ENCODE measurements at regions of chr1 and their contacts with region 1.

Region 1: GRCh38 chr1:182397771-182398393 is 2.6 kb downstream of the TEDDM1 start:
- DNase-seq: peak; percentile 81
- H3K4me3 Mint-ChIP-seq: peak overlapping the region; percentile 0
- H3K27ac Mint-ChIP-seq: peak overlapping the region; percentile 76
- H3K4me1 Mint-ChIP-seq: peaks cover 22% of the 10 kb centered on the region
- H3K27me3 Mint-ChIP-seq: no peaks in the 10 kb centered on the region
- CTCF ChIP-seq: no peak

Region 2: DNA sequence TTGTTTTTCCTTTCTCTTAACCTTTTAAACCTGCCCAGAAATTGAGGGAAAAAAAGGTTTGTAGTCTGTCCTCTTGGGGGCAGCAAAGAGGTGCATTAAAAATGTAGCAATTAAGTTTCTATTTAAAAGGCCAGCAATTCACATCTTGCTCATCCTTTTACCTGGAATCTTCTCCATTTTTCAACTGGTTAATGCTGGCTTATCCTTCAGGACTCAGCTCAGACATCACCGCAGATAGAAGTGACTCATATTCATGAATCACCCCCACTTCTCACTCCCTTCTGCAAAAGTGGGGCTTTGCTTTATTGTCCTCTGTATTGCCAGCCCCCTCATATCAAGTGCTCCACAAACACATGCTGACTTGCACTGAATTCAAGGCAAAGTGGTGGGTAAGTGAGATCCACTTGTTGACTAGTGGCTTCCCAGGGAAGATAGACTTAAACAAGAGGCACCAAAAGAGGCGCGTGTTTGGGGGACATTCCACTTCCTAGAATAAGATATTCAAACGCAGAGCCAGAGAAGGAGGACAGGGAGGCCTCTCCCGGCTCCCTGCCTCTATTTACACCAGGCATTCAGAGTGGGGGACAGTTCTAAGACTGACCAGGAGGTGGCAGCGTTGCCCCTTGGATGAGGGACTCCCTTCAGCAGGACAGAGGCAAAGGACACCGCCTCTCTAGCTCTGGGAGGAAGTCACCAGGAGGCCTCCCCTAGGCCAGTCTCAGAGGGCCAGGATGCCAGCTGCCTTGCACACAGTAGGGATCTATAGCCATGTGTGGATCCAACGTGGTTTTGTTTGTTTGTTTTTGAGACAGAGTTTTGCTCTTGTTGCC is 313.2 kb before region 1 on chr1:
- CTCF ChIA-PET with region 1: interaction called, 450 read pairs
- POLR2A ChIA-PET with region 1: interaction called, 112 read pairs
- intact Hi-C with region 1: loop called (anchors 1 kb)
- DNase-seq: peak; percentile 91
- H3K4me3 Mint-ChIP-seq: no peak overlapping the region
- H3K27ac Mint-ChIP-seq: no peak overlapping the region
- H3K4me1 Mint-ChIP-seq: peaks cover 27% of the 10 kb centered on the region
- H3K27me3 Mint-ChIP-seq: no peaks in the 10 kb centered on the region
- CTCF ChIP-seq: peak; percentile 98

Region 3: DNA sequence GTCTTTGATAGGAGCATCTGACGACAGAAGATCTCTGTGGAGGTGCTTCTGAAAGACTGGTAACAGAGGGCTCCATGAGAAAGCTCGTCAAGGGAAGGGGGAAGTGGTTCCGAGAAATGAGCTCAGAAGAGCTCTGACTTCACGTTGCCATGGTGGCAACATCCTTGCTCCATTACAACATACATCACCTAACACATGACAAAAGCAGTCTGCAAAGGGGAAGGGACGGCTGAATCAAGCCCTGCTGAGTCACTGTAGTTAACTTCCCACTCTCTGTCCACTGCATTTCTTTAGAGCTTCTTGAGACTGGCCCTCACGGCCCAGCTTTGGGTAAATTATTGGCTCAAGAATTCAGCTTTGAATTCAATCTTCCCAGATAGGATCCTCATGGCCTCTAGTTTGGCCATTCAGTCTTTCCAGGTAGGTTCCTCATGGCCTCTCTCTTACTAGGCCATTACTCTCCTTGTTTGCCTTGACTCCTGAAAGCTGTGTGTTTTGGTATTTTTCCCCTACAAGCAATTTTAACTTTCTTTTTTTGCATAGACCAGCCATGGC is 248.4 kb before region 1 on chr1:
- CTCF ChIA-PET with region 1: interaction called, 353 read pairs
- POLR2A ChIA-PET with region 1: no interaction called
- intact Hi-C with region 1: no loop called
- DNase-seq: peak; percentile 82
- H3K4me3 Mint-ChIP-seq: no peak overlapping the region
- H3K27ac Mint-ChIP-seq: peak overlapping the region; percentile 24
- H3K4me1 Mint-ChIP-seq: peaks cover 34% of the 10 kb centered on the region
- H3K27me3 Mint-ChIP-seq: no peaks in the 10 kb centered on the region
- CTCF ChIP-seq: no peak

Region 4: DNA sequence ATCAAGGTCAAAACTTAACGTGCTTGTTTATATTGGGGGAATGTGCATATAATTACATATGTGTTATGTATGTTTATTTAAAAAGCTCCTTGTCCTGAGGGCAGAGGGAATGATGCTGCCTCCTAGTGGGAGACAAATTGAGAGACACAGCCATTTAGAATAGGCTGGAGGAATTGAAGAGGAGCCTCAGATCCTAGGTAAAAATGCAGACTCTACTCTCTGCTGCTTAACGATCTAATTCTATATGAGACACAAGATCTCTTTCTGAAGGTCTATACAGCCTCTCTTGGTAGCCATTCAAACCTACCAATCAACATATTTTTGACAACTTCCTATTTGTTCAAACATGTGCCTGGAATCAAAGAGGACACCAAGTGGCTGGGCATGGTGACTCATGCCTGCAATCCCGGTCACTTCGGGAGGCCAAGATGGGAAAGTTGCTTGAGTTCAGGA is 199.8 kb before region 1 on chr1:
- CTCF ChIA-PET with region 1: interaction called, 8 read pairs
- POLR2A ChIA-PET with region 1: interaction called, 14 read pairs
- intact Hi-C with region 1: loop called (anchors 2 kb)
- DNase-seq: peak; percentile 62
- H3K4me3 Mint-ChIP-seq: peak overlapping the region; percentile 15
- H3K27ac Mint-ChIP-seq: peak overlapping the region; percentile 94
- H3K4me1 Mint-ChIP-seq: peaks cover 56% of the 10 kb centered on the region
- H3K27me3 Mint-ChIP-seq: no peaks in the 10 kb centered on the region
- CTCF ChIP-seq: peak; percentile 20

Region 5: DNA sequence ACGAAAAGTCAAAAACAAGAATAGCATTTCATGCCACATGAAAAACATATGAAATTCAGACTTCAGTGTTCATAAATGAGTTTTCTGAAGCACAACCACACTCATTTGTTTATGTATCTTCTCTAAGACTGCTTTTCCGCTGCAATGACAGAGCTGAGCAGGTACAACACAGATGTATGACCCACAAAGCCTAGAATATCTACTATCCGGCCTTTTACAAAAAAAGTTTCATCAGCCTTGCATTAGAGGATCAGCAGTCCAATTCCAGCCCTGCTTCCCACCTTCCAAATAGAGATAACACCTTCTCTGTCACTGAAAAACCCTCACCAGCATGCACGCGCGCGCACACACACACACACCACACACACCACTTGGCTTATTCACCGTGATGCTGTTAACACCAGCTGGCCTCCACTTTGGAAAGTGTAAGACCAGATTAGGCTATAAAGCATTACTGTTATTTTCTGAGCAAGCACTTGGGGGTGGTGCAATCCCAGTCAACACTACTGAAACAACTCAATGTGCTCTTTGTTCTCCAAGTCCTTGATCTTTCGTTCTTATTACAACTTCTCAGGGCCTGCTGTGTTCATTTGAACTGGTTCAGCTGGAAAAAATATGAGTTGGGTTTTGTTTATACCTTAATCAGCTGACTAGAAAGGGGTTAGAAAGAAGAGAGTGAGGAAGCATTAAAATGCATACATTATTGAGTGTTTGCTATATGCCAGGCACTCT is 96.2 kb before region 1 on chr1:
- CTCF ChIA-PET with region 1: interaction called, 17 read pairs
- POLR2A ChIA-PET with region 1: interaction called, 4 read pairs
- intact Hi-C with region 1: loop called (anchors 1 kb)
- DNase-seq: peak; percentile 42
- H3K4me3 Mint-ChIP-seq: no peak overlapping the region
- H3K27ac Mint-ChIP-seq: no peak overlapping the region
- H3K4me1 Mint-ChIP-seq: peaks cover 24% of the 10 kb centered on the region
- H3K27me3 Mint-ChIP-seq: no peaks in the 10 kb centered on the region
- CTCF ChIP-seq: no peak

Region 6: DNA sequence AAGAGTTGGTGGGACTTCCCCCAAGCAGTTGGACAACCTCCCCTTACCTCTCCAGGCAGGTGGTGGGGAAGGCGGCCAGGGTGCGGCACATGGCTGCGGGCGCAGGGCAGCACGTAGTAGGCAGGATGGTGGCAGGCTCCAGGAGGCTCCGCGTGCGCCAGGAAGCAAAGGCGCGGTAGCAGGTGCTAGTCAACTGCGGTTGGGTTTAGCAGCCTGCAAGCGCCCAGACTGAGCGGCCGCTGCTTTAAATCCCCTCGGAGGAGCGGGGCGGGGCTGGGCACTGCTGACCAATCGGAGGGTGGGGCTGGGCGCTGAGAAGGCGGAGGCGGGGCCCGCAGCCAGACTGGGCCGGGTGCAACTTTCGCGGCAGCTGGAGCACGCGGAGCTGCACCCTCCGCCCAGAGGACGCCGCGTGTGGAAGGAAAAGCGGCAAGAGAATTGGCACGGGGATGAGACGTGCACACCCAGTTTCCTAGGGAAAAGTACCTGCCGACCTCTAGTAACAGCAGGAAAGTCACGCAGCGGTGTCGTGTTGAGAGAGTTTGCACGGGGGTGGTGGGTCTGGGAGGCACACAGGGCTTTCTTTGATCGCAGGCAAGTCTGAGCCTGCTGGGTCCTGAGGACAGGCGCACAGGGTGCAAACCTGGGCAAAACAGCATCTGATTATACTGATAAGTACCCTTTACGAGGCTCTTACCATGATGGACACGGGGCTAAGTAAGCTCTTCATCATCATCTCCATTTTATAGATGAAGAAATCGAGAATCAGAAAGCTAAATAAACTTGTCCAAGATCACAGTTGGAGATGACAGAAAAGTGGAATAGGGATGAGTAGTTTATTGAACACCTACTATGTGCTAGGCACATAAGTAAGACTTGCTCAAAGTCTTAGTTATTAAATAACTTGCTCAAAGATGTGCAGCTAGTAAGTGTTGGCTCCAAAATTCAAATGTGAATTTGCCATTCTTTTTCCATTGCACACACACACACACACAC is 206.6 kb after region 1 on chr1 and contains the start of gene RGS16:
- CTCF ChIA-PET with region 1: interaction called, 11 read pairs
- POLR2A ChIA-PET with region 1: interaction called, 5 read pairs
- intact Hi-C with region 1: no loop called
- DNase-seq: peak; percentile 95
- H3K4me3 Mint-ChIP-seq: no peak within 1 kb of the TSS
- H3K27ac Mint-ChIP-seq: peak within 1 kb of the TSS; percentile 13
- H3K4me1 Mint-ChIP-seq: peaks cover 12% of the 10 kb centered on the region
- H3K27me3 Mint-ChIP-seq: no peaks in the 10 kb centered on the region
- CTCF ChIP-seq: no peak
- total RNA-seq, gene RGS16: 11.9 and 13.7 TPM in 2 replicates